ENCODE measurements at regions of chr12 and their contacts with region 1.

Region 1: DNA sequence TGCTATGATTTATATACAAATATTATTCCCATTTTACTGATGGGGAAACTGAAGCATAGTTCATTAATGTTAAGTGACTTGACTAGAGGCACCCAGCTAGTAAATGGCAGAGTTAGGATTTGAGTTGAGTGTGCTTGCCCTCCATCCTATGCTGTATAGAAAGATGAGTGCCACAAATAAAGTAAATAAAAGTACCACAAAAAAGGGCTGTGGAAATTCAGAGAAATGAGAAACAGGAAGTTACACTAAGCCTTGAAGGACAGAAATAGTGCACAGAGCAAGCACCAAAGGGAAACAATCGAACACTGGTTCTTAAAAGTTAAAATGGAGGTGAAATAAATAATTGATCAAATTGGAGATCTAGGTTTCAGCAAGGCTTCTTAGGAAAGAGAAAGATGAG is 9.2 kb upstream of the ABCD2 start:
- DNase-seq: no peak
- ATAC-seq: no peak
- H3K4me3 ChIP-seq: no peak overlapping the region
- H3K27ac ChIP-seq: no peak overlapping the region
- H3K4me1 ChIP-seq: peaks cover 0 to 3% of the 10 kb centered on the region in 2 experiments; a peak in 2 of 5 replicates
- H3K27me3 ChIP-seq: no peaks in the 10 kb centered on the region
- CTCF ChIP-seq: no peak
- EP300 ChIP-seq: no peak
- POLR2A ChIP-seq: no peak
- RAD21 ChIP-seq: no peak

Region 2: DNA sequence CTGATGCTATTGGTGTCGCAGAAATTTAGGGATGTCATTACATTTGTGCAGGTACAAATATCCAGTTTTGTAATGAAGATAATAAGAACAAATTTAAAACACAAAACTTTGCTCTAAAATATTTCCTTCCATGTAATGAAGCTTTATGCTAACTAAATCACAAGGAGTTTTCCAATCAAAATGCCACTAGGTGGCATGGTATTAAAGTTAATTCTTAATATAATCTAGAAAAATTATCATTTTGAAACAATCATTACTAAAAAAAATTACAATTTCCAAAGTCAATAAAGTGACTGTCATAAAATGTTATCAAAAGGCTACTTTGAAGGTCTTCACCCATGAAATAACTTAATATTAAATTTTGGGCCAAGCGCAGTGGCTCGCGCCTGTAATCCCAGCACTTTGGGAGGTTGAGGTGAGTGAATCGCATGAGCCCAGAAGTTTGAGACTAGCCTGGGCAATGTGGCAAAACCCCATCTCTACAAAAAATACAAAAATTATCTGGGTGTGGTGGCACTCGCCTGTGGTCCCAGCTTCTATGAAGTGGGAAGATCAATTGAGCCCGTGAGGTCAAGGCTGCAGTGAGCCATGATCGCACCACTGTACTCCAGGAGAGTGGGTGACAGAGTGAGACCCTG is 263.4 kb before region 1 on chr12:
- CTCF ChIA-PET with region 1: no interaction called
- POLR2A ChIA-PET with region 1: no interaction called
- in situ Hi-C with region 1: no loop called
- intact Hi-C with region 1: loop called (anchors 5 kb)
- DNase-seq: no peak
- ATAC-seq: no peak
- H3K4me3 ChIP-seq: no peak overlapping the region
- H3K27ac ChIP-seq: no peak overlapping the region
- H3K4me1 ChIP-seq: no peaks in the 10 kb centered on the region
- H3K27me3 ChIP-seq: no peaks in the 10 kb centered on the region
- CTCF ChIP-seq: peak in 1 of 3 experiments; percentile 31; a peak in 2 of 6 replicates
- EP300 ChIP-seq: no peak
- POLR2A ChIP-seq: no peak
- RAD21 ChIP-seq: 0 out of 4 replicates have a peak, but pooled peaks of 1 of the 2 experiments have one; percentile 9

Region 3: DNA sequence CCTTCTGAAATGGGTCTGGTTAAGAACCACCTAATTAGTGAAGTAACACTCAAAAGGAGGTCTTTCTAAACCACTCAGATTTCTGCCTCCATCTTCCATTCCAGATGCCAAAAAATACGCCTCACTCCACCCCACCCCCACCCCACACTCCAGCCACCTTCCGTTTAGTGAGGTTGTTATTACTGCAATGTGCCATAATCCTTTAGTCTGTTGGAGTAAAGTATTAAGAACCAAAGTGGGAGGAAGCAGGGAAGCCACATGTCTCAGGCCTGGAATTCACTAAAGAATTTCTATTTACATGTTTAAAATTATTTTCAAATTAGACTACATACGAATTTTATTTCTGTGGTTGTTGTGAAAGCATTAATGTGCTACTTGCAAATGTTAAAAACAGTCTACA is 193.3 kb before region 1 on chr12:
- CTCF ChIA-PET with region 1: no interaction called
- POLR2A ChIA-PET with region 1: no interaction called
- in situ Hi-C with region 1: no loop called
- intact Hi-C with region 1: loop called (anchors 5 kb)
- DNase-seq: no peak
- ATAC-seq: 0 out of 3 replicates have a peak, but pooled peaks have one; percentile 14
- H3K4me3 ChIP-seq: no peak overlapping the region
- H3K27ac ChIP-seq: no peak overlapping the region
- H3K4me1 ChIP-seq: peaks cover under 1 to 16% of the 10 kb centered on the region in 2 experiments; a peak in 2 of 5 replicates
- H3K27me3 ChIP-seq: no peaks in the 10 kb centered on the region
- CTCF ChIP-seq: no peak
- EP300 ChIP-seq: no peak
- POLR2A ChIP-seq: no peak
- RAD21 ChIP-seq: no peak

Measured in K562 (cell line).